MCF 10A (cell line): ENCODE measurements at regions of chr3 and their contacts with region 1.

Region 1: GRCh38 chr3:197394464-197395321 is 96.3 kb upstream of the DLG1 start:
- DNase-seq: peak; percentile 100
- H3K4me3 Mint-ChIP-seq: peak overlapping the region; percentile 45
- H3K27ac Mint-ChIP-seq: peak overlapping the region; percentile 97
- H3K4me1 Mint-ChIP-seq: peaks cover 24% of the 10 kb centered on the region
- H3K27me3 Mint-ChIP-seq: no peaks in the 10 kb centered on the region
- CTCF ChIP-seq: no peak

Region 2: GRCh38 chr3:197298341-197298857 is 96.3 kb before region 1 on chr3 and contains the start of gene DLG1:
- CTCF ChIA-PET with region 1: interaction called, 5 read pairs
- POLR2A ChIA-PET with region 1: interaction called, 37 read pairs
- intact Hi-C with region 1: loop called (anchors 1 kb)
- DNase-seq: peak; percentile 98
- H3K4me3 Mint-ChIP-seq: peak within 1 kb of the TSS; percentile 94
- H3K27ac Mint-ChIP-seq: peak within 1 kb of the TSS; percentile 97
- H3K4me1 Mint-ChIP-seq: peaks cover 14% of the 10 kb centered on the region
- H3K27me3 Mint-ChIP-seq: no peaks in the 10 kb centered on the region
- CTCF ChIP-seq: no peak
- total RNA-seq, gene DLG1: 121 and 129 TPM in 2 replicates

Region 3: GRCh38 chr3:197317250-197317963 is 77.3 kb before region 1 on chr3:
- CTCF ChIA-PET with region 1: no interaction called
- POLR2A ChIA-PET with region 1: interaction called, 23 read pairs
- intact Hi-C with region 1: no loop called
- DNase-seq: peak; percentile 95
- H3K4me3 Mint-ChIP-seq: peak overlapping the region; percentile 66
- H3K27ac Mint-ChIP-seq: peak overlapping the region; percentile 73
- H3K4me1 Mint-ChIP-seq: peaks cover 25% of the 10 kb centered on the region
- H3K27me3 Mint-ChIP-seq: no peaks in the 10 kb centered on the region
- CTCF ChIP-seq: no peak

Region 4: DNA sequence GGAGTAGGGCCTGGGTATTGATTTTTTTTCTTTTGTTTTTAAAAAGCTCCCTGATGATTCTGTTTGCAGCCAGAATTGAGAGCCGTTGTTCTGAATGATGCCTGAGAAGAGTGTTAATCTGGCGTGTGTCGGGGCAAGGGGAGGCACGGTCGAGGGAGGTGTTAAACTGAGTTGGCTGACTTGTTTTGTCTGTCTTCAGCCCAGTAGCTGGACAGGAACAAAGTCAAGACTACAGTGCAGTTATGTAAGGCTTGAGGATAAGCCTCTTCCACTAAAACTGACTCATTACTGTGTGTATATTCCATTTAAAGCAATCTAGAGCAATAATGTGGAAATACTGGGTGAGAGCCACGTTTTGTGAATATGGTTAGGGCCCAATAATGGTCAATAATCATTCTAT is 22.7 kb after region 1 on chr3:
- CTCF ChIA-PET with region 1: interaction called, 6 read pairs
- POLR2A ChIA-PET with region 1: interaction called, 14 read pairs
- intact Hi-C with region 1: no loop called
- DNase-seq: peak; percentile 74
- H3K4me3 Mint-ChIP-seq: no peak overlapping the region
- H3K27ac Mint-ChIP-seq: peak overlapping the region; percentile 46
- H3K4me1 Mint-ChIP-seq: peaks cover 11% of the 10 kb centered on the region
- H3K27me3 Mint-ChIP-seq: no peaks in the 10 kb centered on the region
- CTCF ChIP-seq: no peak

Region 5: GRCh38 chr3:197501879-197502620 is 107.4 kb after region 1 on chr3:
- CTCF ChIA-PET with region 1: interaction called, 3 read pairs
- POLR2A ChIA-PET with region 1: interaction called, 5 read pairs
- intact Hi-C with region 1: loop called (anchors 5 kb)
- DNase-seq: peak; percentile 96
- H3K4me3 Mint-ChIP-seq: no peak overlapping the region
- H3K27ac Mint-ChIP-seq: no peak overlapping the region
- H3K4me1 Mint-ChIP-seq: peaks cover 9% of the 10 kb centered on the region
- H3K27me3 Mint-ChIP-seq: no peaks in the 10 kb centered on the region
- CTCF ChIP-seq: peak; percentile 89

Region 6: DNA sequence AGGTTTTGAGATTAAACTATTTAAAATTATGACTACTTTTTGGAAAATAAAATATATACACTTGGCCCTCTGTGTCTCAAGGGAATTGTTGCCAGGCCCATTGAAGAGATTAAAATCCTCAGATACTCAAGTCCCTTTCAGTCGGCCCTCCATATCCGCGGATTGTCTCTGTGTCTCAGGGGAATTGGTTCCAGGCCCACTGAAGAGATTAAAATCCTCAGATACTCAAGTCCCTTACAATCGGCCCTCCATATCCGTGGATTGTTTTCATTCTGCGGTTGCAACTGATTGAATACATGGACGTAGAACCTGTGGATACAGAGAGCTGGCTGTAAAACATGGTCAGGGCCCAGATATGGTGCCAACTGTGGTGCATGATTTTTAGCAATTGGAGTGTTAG is 380.6 kb after region 1 on chr3:
- CTCF ChIA-PET with region 1: no interaction called
- POLR2A ChIA-PET with region 1: no interaction called
- intact Hi-C with region 1: no loop called
- DNase-seq: no peak
- H3K4me3 Mint-ChIP-seq: no peak overlapping the region
- H3K27ac Mint-ChIP-seq: peak overlapping the region; percentile 43
- H3K4me1 Mint-ChIP-seq: no peaks in the 10 kb centered on the region
- H3K27me3 Mint-ChIP-seq: no peaks in the 10 kb centered on the region
- CTCF ChIP-seq: no peak

Region 7: GRCh38 chr3:197942956-197943556 is 548.4 kb after region 1 on chr3:
- CTCF ChIA-PET with region 1: no interaction called
- POLR2A ChIA-PET with region 1: no interaction called
- intact Hi-C with region 1: no loop called
- DNase-seq: peak; percentile 45
- H3K4me3 Mint-ChIP-seq: no peak overlapping the region
- H3K27ac Mint-ChIP-seq: no peak overlapping the region
- H3K4me1 Mint-ChIP-seq: no peaks in the 10 kb centered on the region
- H3K27me3 Mint-ChIP-seq: no peaks in the 10 kb centered on the region
- CTCF ChIP-seq: peak; percentile 59